Activated naive CD4-positive, alpha-beta T cell treated with anti-CD3 and anti-CD28 coated beads for 36 hours (primary cell): ENCODE measurements at regions of chr3 and their contacts with region 1.

Region 1: DNA sequence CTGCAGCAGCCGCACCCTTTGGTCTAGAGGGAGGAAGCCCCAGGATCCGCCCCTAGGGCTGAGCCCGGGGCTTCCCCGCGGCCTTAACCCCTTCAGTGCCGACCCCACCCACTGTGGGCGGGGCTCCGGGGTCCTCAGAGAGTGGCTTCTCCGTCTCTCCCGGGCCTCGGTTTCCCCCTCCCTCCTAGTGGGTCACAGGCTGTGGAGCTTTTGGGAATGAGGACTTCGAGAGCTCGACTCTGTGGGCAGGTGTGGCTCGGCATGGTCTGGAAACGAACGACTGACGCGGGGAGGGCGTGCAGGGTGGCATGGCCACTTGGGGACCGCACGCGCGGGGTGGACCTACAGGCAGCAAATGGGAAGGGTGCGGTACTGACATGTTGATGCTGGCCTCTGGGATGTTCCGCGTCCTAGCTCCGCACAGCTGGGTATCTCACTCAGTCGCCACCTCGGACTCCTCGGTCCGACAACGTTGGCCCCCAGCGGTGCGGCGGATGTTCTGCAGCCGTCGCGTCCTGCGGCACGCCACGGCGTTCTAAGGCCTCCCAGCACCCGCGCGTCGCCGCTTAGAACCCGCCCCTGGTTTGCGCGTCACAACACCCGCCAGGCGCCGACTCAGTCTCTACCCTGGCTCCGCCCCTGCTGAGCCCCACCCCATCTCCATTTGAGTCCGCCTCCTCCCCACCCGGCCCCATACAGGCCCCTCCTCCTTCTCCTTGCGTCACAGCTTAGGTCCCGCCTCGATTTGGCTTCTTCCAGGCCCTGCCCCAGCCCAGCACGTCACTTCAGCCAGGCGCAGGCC is at the starts of genes HYAL3 and NAA80:
- DNase-seq: peak; percentile 100
- H3K4me3 Mint-ChIP-seq: peak within 1 kb of the TSS; percentile 99
- H3K27ac Mint-ChIP-seq: peak within 1 kb of the TSS; percentile 97
- H3K4me1 Mint-ChIP-seq: peaks cover 25% of the 10 kb centered on the region
- H3K27me3 Mint-ChIP-seq: no peaks in the 10 kb centered on the region
- total RNA-seq, gene HYAL3: 0.74 to 0.88 TPM
- total RNA-seq, gene NAA80: 7.9 to 10.5 TPM

Region 2: DNA sequence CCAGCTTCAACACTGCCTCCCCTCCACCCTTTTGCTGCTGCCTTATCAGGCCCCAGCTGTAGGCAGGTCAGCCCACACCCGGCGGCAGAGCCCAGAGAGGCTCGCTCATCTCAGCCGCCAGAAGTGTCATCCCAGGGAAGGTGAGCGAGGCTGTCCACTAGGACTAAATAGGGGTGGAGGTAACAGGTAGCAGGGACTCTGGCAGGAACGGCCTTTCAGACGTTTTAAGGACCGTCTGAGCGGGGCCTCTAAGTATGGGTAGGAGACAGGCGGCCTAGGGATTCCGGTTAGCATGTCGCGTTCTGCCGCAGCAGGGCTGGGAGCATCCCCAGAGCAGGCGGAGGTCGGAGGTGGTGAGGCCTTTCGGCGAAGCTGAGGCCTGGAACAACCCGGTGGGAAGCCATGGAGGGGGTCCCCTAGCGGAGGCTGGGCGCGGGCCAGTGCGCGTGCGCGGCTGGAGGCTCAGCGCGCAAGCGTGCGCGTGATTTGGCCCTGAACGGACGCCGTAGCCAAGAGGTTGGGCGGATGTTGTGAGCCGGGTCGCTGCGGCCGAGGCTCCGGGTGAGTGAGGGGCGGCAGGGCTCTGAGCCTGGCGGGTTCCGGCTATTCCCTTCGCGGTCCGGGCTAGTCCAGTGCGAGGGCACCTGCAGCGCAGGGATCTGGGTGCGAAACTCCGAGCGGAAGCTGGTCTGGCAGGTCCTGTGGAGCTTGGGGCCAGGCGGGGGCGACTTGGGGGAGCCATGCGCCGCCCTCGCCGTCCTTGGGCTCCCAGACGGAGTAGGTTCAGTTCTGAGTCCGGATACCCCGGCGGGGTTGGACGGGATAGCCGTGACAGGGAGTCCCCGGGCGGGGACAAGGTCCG is 609.8 kb before region 1 on chr3 and contains the starts of genes MST1 and RNF123:
- CTCF ChIA-PET with region 1: no interaction called
- intact Hi-C with region 1: no loop called
- DNase-seq: peak; percentile 93
- H3K4me3 Mint-ChIP-seq: peak within 1 kb of the TSS; percentile 97
- H3K27ac Mint-ChIP-seq: peak within 1 kb of the TSS; percentile 83
- H3K4me1 Mint-ChIP-seq: peaks cover 33% of the 10 kb centered on the region
- H3K27me3 Mint-ChIP-seq: peaks cover 4% of the 10 kb centered on the region
- total RNA-seq, gene MST1: 10.7 to 13.1 TPM
- total RNA-seq, gene RNF123: 20.3 to 21.5 TPM

Region 3: GRCh38 chr3:49939858-49940666 is 359.0 kb before region 1 on chr3 and contains the start of gene RBM6:
- CTCF ChIA-PET with region 1: no interaction called
- intact Hi-C with region 1: loop called (anchors 2 kb)
- DNase-seq: peak; percentile 98
- H3K4me3 Mint-ChIP-seq: peak within 1 kb of the TSS; percentile 98
- H3K27ac Mint-ChIP-seq: peak within 1 kb of the TSS; percentile 93
- H3K4me1 Mint-ChIP-seq: peaks cover 29% of the 10 kb centered on the region
- H3K27me3 Mint-ChIP-seq: no peaks in the 10 kb centered on the region
- total RNA-seq, gene RBM6: 89.1 to 98.2 TPM

Region 4: GRCh38 chr3:50245831-50246516 is 53.1 kb before region 1 on chr3:
- CTCF ChIA-PET with region 1: interaction called, 9 read pairs
- intact Hi-C with region 1: loop called (anchors 2 kb)
- DNase-seq: peak; percentile 97
- H3K4me3 Mint-ChIP-seq: peak overlapping the region; percentile 81
- H3K27ac Mint-ChIP-seq: peak overlapping the region; percentile 95
- H3K4me1 Mint-ChIP-seq: peaks cover 82% of the 10 kb centered on the region
- H3K27me3 Mint-ChIP-seq: no peaks in the 10 kb centered on the region

Region 5: DNA sequence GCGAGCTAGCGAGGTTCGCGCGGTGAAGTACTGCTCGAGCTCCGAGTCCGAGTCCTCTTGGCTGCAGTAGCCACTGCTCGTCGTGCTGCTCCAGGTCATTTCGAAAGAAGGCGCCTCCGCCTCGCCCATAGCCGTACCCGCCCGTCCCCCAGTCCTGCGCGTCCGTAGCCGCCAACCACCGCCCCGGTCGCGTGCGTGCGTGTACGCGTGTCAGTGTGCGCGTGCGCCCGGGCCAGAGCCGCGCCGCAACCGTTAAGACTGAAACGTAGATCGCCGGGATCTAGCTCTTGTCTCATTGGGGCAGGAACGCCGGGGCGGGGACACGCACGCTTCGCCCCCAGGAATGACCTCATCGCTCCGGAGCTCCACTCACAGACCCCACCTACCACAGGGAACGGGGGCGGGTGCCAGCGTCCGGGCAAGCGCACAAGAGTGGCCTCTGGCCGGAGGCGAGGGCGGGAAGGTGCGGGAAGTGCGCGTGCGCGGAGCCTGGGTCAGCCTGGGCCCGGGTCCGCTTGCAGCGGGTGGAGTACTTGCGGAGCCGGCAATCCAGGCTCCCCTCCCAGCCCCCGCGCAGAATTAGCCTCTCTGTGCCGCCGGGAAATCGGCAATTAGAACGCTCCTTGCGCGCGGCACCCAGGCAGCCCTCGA is 38.3 kb after region 1 on chr3:
- CTCF ChIA-PET with region 1: interaction called, 6 read pairs
- intact Hi-C with region 1: loop called (anchors 1 kb)
- DNase-seq: peak; percentile 99
- H3K4me3 Mint-ChIP-seq: peak overlapping the region; percentile 94
- H3K27ac Mint-ChIP-seq: peak overlapping the region; percentile 94
- H3K4me1 Mint-ChIP-seq: peaks cover 57% of the 10 kb centered on the region
- H3K27me3 Mint-ChIP-seq: no peaks in the 10 kb centered on the region

Region 6: GRCh38 chr3:50358911-50359759 is 60.1 kb after region 1 on chr3 and contains the start of gene TMEM115:
- CTCF ChIA-PET with region 1: no interaction called
- intact Hi-C with region 1: loop called (anchors 1 kb)
- DNase-seq: peak; percentile 98
- H3K4me3 Mint-ChIP-seq: peak within 1 kb of the TSS; percentile 97
- H3K27ac Mint-ChIP-seq: peak within 1 kb of the TSS; percentile 89
- H3K4me1 Mint-ChIP-seq: peaks cover 43% of the 10 kb centered on the region
- H3K27me3 Mint-ChIP-seq: no peaks in the 10 kb centered on the region
- total RNA-seq, gene TMEM115: 10.6 to 11.1 TPM

Region 7: GRCh38 chr3:50388016-50388719 is 89.1 kb after region 1 on chr3:
- CTCF ChIA-PET with region 1: no interaction called
- intact Hi-C with region 1: no loop called
- DNase-seq: no peak
- H3K4me3 Mint-ChIP-seq: no peak overlapping the region
- H3K27ac Mint-ChIP-seq: no peak overlapping the region
- H3K4me1 Mint-ChIP-seq: no peaks in the 10 kb centered on the region
- H3K27me3 Mint-ChIP-seq: no peaks in the 10 kb centered on the region

Region 8: DNA sequence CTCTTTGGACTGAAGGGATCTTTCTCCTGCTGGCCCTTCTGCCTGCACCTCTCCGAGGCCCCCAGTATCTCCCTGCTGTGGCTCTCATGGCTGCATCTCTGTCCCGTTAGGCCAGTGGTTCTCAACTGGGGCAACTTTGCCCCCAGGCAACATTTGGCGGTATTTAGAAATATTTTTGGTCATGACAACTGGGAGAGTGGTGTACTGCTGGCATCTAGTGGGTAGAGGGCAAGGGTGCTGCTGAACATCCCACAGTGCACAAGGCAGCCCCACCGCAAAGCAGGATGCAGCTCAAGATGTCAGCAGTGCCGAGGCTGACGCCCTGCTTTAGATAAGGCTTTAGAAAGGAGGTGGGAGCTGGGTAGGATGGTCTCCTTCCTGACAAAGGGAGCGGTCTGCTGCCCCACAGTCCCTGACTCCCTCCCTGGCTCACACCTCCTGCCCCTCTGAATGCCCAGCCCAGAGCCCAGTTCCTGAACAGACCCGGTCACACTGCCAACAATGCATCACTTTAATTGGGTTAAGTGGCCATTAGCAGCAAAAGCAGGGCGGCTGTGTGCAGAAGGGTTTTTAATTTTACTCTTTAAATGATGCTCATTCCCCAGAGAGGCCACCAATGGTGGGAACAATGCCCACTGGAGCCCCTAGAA is 129.1 kb after region 1 on chr3:
- CTCF ChIA-PET with region 1: no interaction called
- intact Hi-C with region 1: no loop called
- DNase-seq: no peak
- H3K4me3 Mint-ChIP-seq: no peak overlapping the region
- H3K27ac Mint-ChIP-seq: no peak overlapping the region
- H3K4me1 Mint-ChIP-seq: no peaks in the 10 kb centered on the region
- H3K27me3 Mint-ChIP-seq: no peaks in the 10 kb centered on the region